A549 (cell line): ENCODE measurements at regions of chr7 and their contacts with region 1.

Region 1: GRCh38 chr7:97835296-97836138 is 36.7 kb downstream of the ASNS start:
- DNase-seq: peak; percentile 21 to 67
- ATAC-seq: peak; percentile 78 to 96; a peak in 5 of 6 replicates
- H3K4me3 ChIP-seq: no peak overlapping the region
- H3K27ac ChIP-seq: no peak overlapping the region
- H3K4me1 ChIP-seq: no peaks in the 10 kb centered on the region
- CTCF ChIP-seq: peak; percentile 86
- EP300 ChIP-seq: no peak
- POLR2A ChIP-seq: no peak
- RAD21 ChIP-seq: peak; percentile 80 to 81

Region 2: DNA sequence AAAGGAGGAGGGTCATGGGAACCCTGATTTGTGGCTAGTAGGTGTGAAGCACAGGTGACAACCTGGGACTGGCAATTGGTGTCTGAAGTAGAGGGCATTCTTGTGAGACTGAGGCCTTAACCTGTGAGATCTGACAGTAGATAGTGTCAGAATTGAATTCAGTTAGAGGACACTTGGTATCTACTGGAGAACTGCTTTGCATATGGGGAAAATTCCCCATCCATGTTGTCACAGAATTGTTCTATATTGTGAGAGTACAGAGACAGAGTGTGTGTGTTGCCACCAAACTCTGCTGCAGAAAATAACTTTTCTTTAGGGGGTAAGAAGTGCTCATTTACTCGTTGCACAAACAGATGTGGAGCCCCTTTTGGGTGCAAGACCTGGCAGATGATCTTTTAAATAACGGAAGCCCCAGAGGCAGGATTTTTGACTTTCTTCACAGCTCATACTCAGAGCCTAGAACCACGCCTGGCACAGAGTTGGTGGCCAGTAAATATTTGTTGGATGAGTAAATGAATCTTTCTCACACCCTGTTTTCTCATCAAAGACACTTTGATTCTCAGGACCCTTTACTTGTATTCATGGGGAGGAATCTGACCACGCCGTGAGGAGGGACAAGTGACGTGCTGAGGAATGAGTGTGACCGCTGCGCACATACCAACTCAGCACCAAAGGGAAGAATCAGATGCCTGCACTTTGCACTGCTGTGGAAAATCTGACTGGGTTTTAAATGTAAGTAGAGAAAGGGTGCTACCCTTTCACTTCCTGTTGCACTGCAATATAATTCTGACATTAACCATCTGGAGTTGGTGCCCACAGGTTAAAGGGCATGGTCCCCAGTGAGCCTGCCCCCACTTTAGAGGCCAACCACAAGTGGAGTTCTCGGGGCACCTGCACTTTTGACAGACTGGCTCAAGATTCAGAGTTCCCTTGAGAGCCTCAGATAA is 757.2 kb before region 1 on chr7:
- CTCF ChIA-PET with region 1: no interaction called
- POLR2A ChIA-PET with region 1: no interaction called
- DNase-seq: no peak
- ATAC-seq: no peak
- H3K4me3 ChIP-seq: no peak overlapping the region
- H3K27ac ChIP-seq: no peak overlapping the region
- H3K4me1 ChIP-seq: no peaks in the 10 kb centered on the region
- CTCF ChIP-seq: no peak
- EP300 ChIP-seq: no peak
- POLR2A ChIP-seq: no peak
- RAD21 ChIP-seq: no peak

Region 3: DNA sequence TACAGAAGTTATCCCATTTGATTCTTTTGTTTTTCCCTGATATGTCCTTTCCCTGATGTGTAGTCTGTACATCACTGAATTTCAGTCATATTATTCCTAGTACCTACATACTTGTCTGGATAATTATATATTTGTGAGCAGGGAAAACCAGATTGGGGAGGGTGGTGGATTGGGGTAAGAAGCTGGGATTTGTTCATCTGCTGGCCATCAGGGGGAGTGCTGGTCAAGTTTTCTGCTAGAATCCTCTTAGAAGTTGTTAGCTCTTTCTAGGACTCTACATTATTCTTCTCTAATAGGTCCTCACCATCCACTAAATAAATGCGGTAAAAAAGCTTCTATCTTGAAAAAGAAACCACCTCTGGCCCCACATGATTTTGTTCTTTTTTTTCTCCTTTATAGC is 336.3 kb before region 1 on chr7:
- CTCF ChIA-PET with region 1: interaction called, 11 read pairs
- POLR2A ChIA-PET with region 1: no interaction called
- DNase-seq: peak; percentile 21 to 56
- ATAC-seq: peak; percentile 80 to 83; a peak in 5 of 6 replicates
- H3K4me3 ChIP-seq: no peak overlapping the region
- H3K27ac ChIP-seq: no peak overlapping the region
- H3K4me1 ChIP-seq: no peaks in the 10 kb centered on the region
- CTCF ChIP-seq: peak; percentile 41
- EP300 ChIP-seq: no peak
- POLR2A ChIP-seq: no peak
- RAD21 ChIP-seq: peak; percentile 38 to 55; a peak in 4 of 5 replicates

Region 4: GRCh38 chr7:97801108-97801507 is 34.4 kb before region 1 on chr7:
- CTCF ChIA-PET with region 1: no interaction called
- POLR2A ChIA-PET with region 1: no interaction called
- DNase-seq: no peak
- ATAC-seq: no peak
- H3K4me3 ChIP-seq: no peak overlapping the region
- H3K27ac ChIP-seq: no peak overlapping the region
- H3K4me1 ChIP-seq: no peaks in the 10 kb centered on the region
- CTCF ChIP-seq: no peak
- EP300 ChIP-seq: no peak
- POLR2A ChIP-seq: no peak
- RAD21 ChIP-seq: no peak

Region 5: DNA sequence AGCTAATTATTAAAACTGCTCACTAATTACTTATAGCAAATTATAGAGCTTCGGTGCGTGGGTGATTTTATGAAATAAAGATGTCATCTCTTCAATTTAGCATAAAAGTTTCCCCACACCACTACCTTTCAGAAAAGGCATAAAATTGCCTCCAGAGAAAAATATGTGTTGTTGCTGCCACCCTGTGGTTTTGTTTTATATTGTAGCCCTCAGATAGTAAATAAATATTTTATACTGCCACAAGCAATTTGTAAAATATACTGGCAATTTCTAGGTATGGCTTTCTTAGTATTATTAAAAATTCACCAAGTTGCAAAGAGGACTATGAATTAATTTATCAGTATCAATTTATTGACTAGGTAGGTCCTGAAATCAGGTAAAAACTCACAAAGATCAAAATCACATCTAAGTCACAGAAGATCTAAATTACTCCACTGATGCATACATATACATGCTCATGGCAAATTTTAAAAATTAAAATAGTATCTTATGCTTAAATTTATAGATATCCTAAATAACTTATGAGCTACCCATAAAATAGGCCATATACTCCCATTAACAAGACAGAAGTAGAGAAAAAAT is 10.2 kb after region 1 on chr7:
- CTCF ChIA-PET with region 1: interaction called, 43 read pairs
- POLR2A ChIA-PET with region 1: no interaction called
- DNase-seq: peak; percentile 16 to 24
- ATAC-seq: peak in 1 of 2 experiments; percentile 64; a peak in 3 of 6 replicates
- H3K4me3 ChIP-seq: no peak overlapping the region
- H3K27ac ChIP-seq: no peak overlapping the region
- H3K4me1 ChIP-seq: no peaks in the 10 kb centered on the region
- CTCF ChIP-seq: peak; percentile 74
- EP300 ChIP-seq: no peak
- POLR2A ChIP-seq: no peak
- RAD21 ChIP-seq: peak; percentile 60 to 69